ENCODE measurements at regions of chr10 and their contacts with region 1.

Region 1: DNA sequence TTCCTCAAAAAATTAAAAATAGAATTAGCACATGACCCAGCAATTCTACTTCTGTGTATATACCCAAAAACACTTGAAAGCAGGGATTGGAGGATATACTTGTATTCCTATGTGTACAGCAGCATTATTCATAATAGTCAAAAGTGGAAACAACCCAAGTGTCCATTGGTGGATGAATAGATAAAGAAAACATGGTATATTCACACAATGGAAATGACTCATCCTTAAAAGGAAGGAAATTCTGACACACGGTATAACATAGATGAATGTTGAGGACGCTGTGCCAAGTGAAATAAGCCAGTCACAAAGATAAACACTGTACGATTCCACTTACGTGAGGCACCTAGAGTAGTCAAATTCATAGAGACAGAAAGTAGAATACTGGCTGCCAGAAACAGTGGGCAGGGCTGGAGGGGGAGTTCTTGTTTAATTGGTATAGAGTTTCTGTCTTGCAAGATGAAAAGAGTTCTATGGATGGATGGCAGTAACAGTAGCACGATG is 26.6 kb upstream of the KAT6B start:
- DNase-seq: no peak
- ATAC-seq: no peak
- H3K4me3 ChIP-seq: no peak overlapping the region
- H3K4me3 Mint-ChIP-seq: no peak overlapping the region
- H3K27ac ChIP-seq: no peak overlapping the region
- H3K27ac Mint-ChIP-seq: no peak overlapping the region
- H3K4me1 ChIP-seq: peaks cover 22 to 24% of the 10 kb centered on the region in 2 donors
- H3K4me1 Mint-ChIP-seq: peaks cover 22% of the 10 kb centered on the region
- H3K27me3 ChIP-seq: peaks cover 0 to 7% (median 4%) of the 10 kb centered on the region in 4 experiments
- H3K27me3 Mint-ChIP-seq: peaks cover 10% of the 10 kb centered on the region
- CTCF ChIP-seq: no peak

Region 2: GRCh38 chr10:74669210-74669609 is 130.6 kb before region 1 on chr10:
- CTCF ChIA-PET with region 1: no interaction called
- POLR2A ChIA-PET with region 1: no interaction called
- intact Hi-C with region 1: no loop called
- DNase-seq: no peak
- ATAC-seq: no peak
- H3K4me3 ChIP-seq: no peak overlapping the region
- H3K4me3 Mint-ChIP-seq: no peak overlapping the region
- H3K27ac ChIP-seq: no peak overlapping the region
- H3K27ac Mint-ChIP-seq: no peak overlapping the region
- H3K4me1 ChIP-seq: no peaks in the 10 kb centered on the region
- H3K4me1 Mint-ChIP-seq: no peaks in the 10 kb centered on the region
- H3K27me3 ChIP-seq: no peaks in the 10 kb centered on the region
- H3K27me3 Mint-ChIP-seq: no peaks in the 10 kb centered on the region
- CTCF ChIP-seq: no peak

Region 3: GRCh38 chr10:74683621-74684364 is 116.0 kb before region 1 on chr10:
- CTCF ChIA-PET with region 1: no interaction called
- POLR2A ChIA-PET with region 1: no interaction called
- intact Hi-C with region 1: loop called (anchors 10 kb)
- DNase-seq: peak; percentile 16
- ATAC-seq: no peak
- H3K4me3 ChIP-seq: no peak overlapping the region
- H3K4me3 Mint-ChIP-seq: no peak overlapping the region
- H3K27ac ChIP-seq: no peak overlapping the region
- H3K27ac Mint-ChIP-seq: peak overlapping the region; percentile 42
- H3K4me1 ChIP-seq: peaks cover 7% of the 10 kb centered on the region in 2 donors
- H3K4me1 Mint-ChIP-seq: peaks cover 19% of the 10 kb centered on the region
- H3K27me3 ChIP-seq: no peaks in the 10 kb centered on the region
- H3K27me3 Mint-ChIP-seq: no peaks in the 10 kb centered on the region
- CTCF ChIP-seq: no peak